B cell (primary cell): ENCODE measurements at regions of chr6 and their contacts with region 1.

Region 1: DNA sequence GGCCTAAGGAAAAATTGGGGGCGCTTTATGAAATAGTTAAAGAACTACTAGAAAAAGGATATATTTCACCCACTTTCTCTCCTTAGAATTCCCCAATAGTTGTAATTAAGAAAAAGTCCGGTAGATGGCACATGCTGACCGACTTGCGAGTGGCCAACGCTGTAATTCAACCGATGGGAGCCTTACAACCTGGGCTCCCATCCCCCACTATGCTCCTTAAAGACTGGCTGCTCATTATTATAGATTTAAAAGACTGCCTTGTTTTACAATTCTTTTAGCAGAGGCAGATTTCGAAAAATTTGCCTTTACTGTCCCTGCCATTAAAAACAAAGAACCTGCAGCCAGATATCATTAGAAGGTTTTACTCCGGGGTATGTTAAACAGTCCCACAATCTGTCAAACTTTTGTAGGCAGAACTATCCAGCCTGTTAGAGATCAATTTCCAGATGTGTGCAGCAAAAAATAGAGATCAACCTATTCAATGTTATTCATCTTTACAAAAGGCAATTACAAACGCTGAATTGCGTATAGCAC is 58.5 kb upstream of the PRSS16 start:
- DNase-seq: peak; percentile 84
- ATAC-seq: peak; percentile 90
- H3K4me3 ChIP-seq: peak overlapping the region; percentile 55 to 78 (median 67)
- H3K4me3 Mint-ChIP-seq: peak overlapping the region; percentile 93
- H3K27ac ChIP-seq: peak overlapping the region in 1 of 2 donors; percentile 48
- H3K27ac Mint-ChIP-seq: peak overlapping the region; percentile 32
- H3K4me1 ChIP-seq: peaks cover 6 to 12% of the 10 kb centered on the region in 2 donors
- H3K4me1 Mint-ChIP-seq: peaks cover 8% of the 10 kb centered on the region
- H3K27me3 ChIP-seq: peaks cover 0 to 4% (median 0%) of the 10 kb centered on the region in 4 experiments
- H3K27me3 Mint-ChIP-seq: peaks cover 3% of the 10 kb centered on the region
- CTCF ChIP-seq: peak; percentile 85

Region 2: DNA sequence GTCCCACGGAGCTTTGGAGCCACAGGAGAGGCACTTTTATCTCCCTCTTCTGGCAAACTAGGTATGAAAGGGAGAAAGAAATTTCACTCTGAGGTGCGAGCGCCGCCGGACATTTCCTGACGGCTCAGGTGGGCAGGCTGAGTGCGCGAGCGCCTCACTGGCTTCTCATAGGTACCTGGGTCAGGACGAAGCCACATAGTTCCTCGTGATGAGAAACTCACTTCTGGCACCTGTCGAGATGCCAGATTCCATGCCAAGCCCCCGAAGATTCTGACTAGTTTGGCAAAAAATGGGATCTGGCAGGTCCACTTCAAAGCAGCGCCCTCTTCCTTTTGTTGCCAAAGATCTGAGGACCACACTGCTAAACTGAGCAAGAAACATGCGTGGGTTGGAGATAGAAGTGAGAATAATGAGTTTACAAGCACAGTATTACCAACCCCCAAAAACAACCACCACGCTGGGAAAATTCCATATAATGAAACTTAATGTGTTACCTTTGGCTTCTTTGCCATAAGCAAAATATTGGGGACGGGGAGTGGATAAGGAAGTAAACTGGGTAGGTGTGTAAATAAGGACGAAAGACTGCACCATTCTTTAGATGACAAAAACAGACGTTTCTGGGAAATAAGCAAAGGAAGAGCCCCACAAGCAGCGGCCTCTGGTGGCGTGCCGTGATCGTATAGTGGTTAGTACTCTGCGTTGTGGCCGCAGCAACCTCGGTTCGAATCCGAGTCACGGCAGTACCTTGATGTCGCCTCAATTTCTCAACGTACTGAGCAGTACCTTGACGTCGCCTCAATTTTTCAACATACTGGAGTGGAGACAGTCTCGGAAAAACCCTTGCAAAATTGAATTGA is 31.3 kb before region 1 on chr6:
- CTCF ChIA-PET with region 1: interaction called, 5 read pairs
- POLR2A ChIA-PET with region 1: no interaction called
- intact Hi-C with region 1: loop called (anchors 2 kb)
- DNase-seq: peak; percentile 91
- ATAC-seq: peak; percentile 77
- H3K4me3 ChIP-seq: peak overlapping the region; percentile 59 to 91 (median 72)
- H3K4me3 Mint-ChIP-seq: peak overlapping the region; percentile 94
- H3K27ac ChIP-seq: peak overlapping the region; percentile 18 to 45
- H3K27ac Mint-ChIP-seq: peak overlapping the region; percentile 85
- H3K4me1 ChIP-seq: peaks cover 17 to 20% of the 10 kb centered on the region in 2 donors
- H3K4me1 Mint-ChIP-seq: peaks cover 25% of the 10 kb centered on the region
- H3K27me3 ChIP-seq: no peaks in the 10 kb centered on the region
- H3K27me3 Mint-ChIP-seq: no peaks in the 10 kb centered on the region
- CTCF ChIP-seq: peak; percentile 64

Region 3: DNA sequence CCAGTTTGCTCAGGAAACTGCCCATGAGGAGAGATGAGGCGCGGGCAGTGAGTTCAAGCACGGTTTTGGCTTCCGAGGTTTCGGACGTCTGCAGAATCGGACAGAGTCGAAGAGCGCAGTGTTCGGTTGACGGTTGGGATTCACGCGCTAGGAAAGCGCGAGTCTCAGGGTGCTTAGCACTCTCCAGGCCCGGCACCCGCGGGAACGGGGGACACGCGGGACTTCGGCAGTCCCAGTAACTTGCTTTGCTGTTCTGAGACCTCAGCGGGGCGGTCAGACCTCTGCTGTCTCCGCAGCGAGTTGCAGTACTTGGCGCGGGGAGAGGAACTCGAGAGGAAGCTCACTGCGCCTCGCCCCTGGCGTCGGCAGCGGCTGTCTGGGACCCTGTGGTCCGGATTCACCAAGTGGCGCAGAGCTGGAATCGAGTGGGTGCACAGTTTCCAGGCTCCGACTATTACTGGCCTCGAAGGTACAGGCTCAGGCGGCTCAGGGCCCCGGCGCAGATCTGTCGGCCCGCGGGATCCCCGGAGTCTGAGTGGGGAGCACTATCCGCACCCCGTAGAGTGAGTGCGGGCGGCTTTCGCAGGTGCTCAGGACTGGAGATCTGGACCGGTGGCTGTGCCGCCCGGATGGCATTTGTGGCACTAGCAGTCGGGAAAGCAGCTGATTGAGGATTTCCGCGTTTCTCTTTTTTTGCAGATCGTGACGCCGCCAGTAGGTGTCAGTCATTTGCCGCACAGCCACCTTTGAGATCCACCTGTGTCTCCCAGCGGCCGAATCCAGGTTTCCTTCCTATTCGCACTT is 123.4 kb after region 1 on chr6 and contains the start of gene POM121L2:
- CTCF ChIA-PET with region 1: interaction called, 4 read pairs
- POLR2A ChIA-PET with region 1: no interaction called
- intact Hi-C with region 1: loop called (anchors 1 kb)
- DNase-seq: peak; percentile 82
- ATAC-seq: peak; percentile 60
- H3K4me3 ChIP-seq: peak within 1 kb of the TSS; percentile 5 to 69 (median 62)
- H3K4me3 Mint-ChIP-seq: peak within 1 kb of the TSS; percentile 88
- H3K27ac ChIP-seq: no peak within 1 kb of the TSS
- H3K27ac Mint-ChIP-seq: no peak within 1 kb of the TSS
- H3K4me1 ChIP-seq: peaks cover 12 to 13% of the 10 kb centered on the region in 2 donors
- H3K4me1 Mint-ChIP-seq: peaks cover 13% of the 10 kb centered on the region
- H3K27me3 ChIP-seq: peaks cover 0 to 56% (median 38%) of the 10 kb centered on the region in 4 experiments
- H3K27me3 Mint-ChIP-seq: peaks cover 70% of the 10 kb centered on the region
- CTCF ChIP-seq: peak; percentile 82
- total RNA-seq, gene POM121L2: not detected in 2 replicates

Region 4: DNA sequence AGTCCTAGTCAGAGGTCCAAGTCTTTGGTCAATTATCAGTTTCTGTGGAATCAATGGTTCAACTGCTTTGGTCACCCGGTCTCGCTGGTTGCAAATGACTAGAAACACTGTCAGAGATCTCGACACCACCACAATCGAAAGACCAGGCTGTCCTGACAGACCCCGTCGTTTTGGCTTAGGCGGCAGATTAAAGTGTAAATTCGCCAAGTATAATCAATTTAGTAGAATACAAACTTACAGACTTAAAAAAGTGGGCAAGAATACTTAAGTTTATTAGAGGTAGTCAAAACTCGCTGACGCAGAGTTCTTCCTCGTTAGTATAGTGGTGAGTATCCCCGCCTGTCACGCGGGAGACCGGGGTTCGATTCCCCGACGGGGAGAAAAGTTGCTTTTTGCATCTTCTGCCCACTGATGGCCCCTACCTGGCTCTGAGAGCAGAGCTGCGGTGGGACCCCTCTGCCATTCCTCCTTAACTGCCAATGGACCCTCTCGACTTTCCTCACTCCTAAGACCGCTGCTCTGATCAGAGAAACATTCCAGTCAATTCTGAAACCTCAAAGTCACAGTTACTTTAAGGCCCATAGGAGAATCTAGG is 314.6 kb after region 1 on chr6:
- CTCF ChIA-PET with region 1: no interaction called
- POLR2A ChIA-PET with region 1: no interaction called
- intact Hi-C with region 1: loop called (anchors 10 kb)
- DNase-seq: peak; percentile 89
- ATAC-seq: peak; percentile 44
- H3K4me3 ChIP-seq: peak overlapping the region; percentile 48 to 82 (median 74)
- H3K4me3 Mint-ChIP-seq: peak overlapping the region; percentile 85
- H3K27ac ChIP-seq: peak overlapping the region in 1 of 2 donors; percentile 64
- H3K27ac Mint-ChIP-seq: peak overlapping the region; percentile 81
- H3K4me1 ChIP-seq: peaks cover 9 to 24% of the 10 kb centered on the region in 2 donors
- H3K4me1 Mint-ChIP-seq: peaks cover 38% of the 10 kb centered on the region
- H3K27me3 ChIP-seq: peaks cover 0 to 4% (median 1%) of the 10 kb centered on the region in 4 experiments
- H3K27me3 Mint-ChIP-seq: peaks cover 9% of the 10 kb centered on the region
- CTCF ChIP-seq: no peak

Region 5: DNA sequence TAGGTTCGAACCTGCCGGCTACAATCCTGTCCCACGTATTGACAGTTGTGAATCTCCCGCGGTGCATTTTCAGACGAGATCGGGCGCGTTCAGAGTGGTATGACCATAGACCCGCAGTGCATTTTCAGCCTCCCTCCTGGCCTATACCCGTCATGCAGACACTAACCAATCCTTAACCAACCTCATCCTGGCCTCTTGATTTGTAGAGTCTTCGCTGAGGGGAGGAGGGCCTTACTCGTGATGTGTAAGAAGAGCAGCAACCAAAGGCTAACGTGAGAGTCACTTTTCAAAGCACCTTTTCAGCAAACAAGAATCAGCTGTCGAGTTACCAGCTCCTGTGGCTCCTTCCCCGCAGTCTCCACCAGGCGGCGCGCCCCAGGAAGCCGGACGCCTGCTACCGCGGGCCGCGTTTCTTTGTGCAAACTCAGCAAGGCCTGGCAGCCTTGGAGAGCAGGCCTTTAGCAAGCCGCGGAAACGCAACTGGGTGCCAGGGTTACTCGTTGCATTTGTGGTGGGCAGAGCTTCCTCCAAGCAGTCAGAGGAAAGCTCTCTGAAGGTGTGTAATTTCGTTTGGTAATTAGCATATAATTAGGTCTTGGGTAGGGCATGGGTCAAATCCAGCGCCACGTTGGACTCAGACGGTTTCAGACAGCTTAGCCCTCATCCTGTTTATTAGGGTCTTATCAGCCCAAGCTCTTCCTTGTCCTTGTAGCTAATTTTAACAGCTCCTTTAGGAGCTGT is 583.5 kb after region 1 on chr6:
- CTCF ChIA-PET with region 1: interaction called, 10 read pairs
- POLR2A ChIA-PET with region 1: no interaction called
- intact Hi-C with region 1: loop called (anchors 1 kb)
- DNase-seq: peak; percentile 87
- ATAC-seq: peak; percentile 88
- H3K4me3 ChIP-seq: no peak overlapping the region
- H3K4me3 Mint-ChIP-seq: peak overlapping the region; percentile 65
- H3K27ac ChIP-seq: peak overlapping the region in 1 of 2 donors; percentile 2
- H3K27ac Mint-ChIP-seq: peak overlapping the region; percentile 84
- H3K4me1 ChIP-seq: peaks cover 26 to 29% of the 10 kb centered on the region in 2 donors
- H3K4me1 Mint-ChIP-seq: peaks cover 36% of the 10 kb centered on the region
- H3K27me3 ChIP-seq: peaks cover 0 to 4% (median 2%) of the 10 kb centered on the region in 4 experiments
- H3K27me3 Mint-ChIP-seq: peaks cover 10% of the 10 kb centered on the region
- CTCF ChIP-seq: peak; percentile 93

Region 6: DNA sequence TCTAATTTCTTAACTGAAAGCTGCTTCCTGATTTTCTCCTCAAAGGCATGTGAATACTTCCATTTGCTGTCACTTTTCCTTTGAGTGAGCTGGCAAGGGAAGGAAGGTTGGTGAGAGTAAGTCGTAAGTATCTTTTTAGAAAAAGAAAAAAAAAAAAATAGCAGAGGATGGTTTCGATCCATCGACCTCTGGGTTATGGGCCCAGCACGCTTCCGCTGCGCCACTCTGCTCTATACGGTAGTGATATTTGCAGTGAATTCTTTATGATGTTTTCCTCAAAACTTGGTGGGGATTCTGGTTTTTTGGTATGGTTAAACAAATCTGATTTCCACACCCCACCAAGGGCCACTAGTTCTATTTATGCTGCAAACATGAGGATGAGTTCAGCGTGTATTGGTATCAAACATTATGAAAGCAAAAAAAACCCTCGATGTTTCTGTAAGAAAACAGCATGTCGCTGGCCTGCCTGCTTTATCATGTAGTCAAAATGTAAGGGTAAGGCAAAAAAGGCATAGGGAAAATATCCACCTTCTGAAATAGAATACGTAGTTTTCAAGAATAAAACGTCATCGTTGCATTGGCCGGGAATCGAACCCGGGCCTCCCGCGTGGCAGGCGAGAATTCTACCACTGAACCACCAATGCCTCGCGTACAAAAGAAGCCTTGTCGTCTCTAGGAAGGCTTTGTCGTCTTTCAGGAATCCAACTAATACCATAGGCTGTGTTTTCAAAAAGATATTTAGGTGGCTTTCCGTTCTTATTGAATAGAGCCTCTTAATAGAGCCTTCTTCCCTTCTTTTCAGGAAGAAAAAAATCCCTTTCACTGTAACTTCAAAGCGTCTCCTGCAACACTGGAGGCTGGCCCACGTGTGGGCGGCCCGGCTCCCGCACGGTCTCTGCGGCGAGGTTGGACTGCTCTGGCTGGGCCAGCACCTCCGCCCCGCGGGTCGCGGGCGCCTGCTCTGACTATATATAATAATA is 713.7 kb after region 1 on chr6:
- CTCF ChIA-PET with region 1: interaction called, 11 read pairs
- POLR2A ChIA-PET with region 1: no interaction called
- intact Hi-C with region 1: loop called (anchors 2 kb)
- DNase-seq: peak; percentile 94
- ATAC-seq: peak; percentile 84
- H3K4me3 ChIP-seq: peak overlapping the region; percentile 56 to 91 (median 70)
- H3K4me3 Mint-ChIP-seq: peak overlapping the region; percentile 94
- H3K27ac ChIP-seq: peak overlapping the region; percentile 78 to 95
- H3K27ac Mint-ChIP-seq: peak overlapping the region; percentile 99
- H3K4me1 ChIP-seq: peaks cover 0 to 8% of the 10 kb centered on the region in 2 donors
- H3K4me1 Mint-ChIP-seq: peaks cover 7% of the 10 kb centered on the region
- H3K27me3 ChIP-seq: no peaks in the 10 kb centered on the region
- H3K27me3 Mint-ChIP-seq: peaks cover 7% of the 10 kb centered on the region
- CTCF ChIP-seq: no peak